H1 (cell line): ENCODE measurements at regions of chr11 and their contacts with region 1.

Region 1: DNA sequence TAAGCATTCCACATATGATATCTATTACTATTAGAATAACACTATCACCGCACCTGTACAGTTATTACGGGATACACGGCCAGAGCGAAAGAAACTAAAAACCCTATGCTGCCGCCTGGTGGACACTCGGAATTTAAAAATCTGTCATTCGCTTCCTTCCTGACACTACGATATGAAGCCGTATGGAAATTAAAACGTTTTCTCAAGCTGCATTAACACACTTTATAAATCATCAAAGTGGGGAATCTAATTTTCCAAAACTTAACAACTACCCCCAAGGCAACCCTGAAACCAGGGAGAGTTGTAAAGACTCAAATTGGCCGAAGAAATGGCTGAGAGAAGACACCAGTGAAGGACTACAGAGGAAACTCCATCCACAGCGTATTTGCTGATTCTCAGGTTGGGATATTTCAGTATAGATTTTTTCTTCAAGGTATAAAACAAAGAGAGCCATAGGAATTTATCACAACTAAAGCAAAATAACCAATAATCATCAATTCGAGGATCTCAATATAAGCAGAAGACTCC is 1.4 kb downstream of the CCDC73 start:
- DNase-seq: peak; percentile 9 to 80
- H3K4me3 ChIP-seq: peak overlapping the region in 1 of 4 experiments; percentile 36; a peak in 2 of 8 replicates
- H3K27ac ChIP-seq: no peak overlapping the region
- H3K4me1 ChIP-seq: no peaks in the 10 kb centered on the region
- H3K27me3 ChIP-seq: no peaks in the 10 kb centered on the region
- CTCF ChIP-seq: peak in 2 of 3 experiments; percentile 58 to 68; a peak in 3 of 4 replicates
- EP300 ChIP-seq: no peak
- POLR2A ChIP-seq: no peak
- RAD21 ChIP-seq: peak; percentile 61 to 71

Region 2: GRCh38 chr11:32713496-32713895 is 79.5 kb before region 1 on chr11:
- CTCF ChIA-PET with region 1: interaction called, 13 read pairs
- POLR2A ChIA-PET with region 1: no interaction called
- DNase-seq: no peak
- H3K4me3 ChIP-seq: no peak overlapping the region
- H3K27ac ChIP-seq: no peak overlapping the region
- H3K4me1 ChIP-seq: no peaks in the 10 kb centered on the region
- H3K27me3 ChIP-seq: no peaks in the 10 kb centered on the region
- CTCF ChIP-seq: peak in 2 of 3 experiments; percentile 32; a peak in 2 of 4 replicates
- EP300 ChIP-seq: no peak
- POLR2A ChIP-seq: no peak
- RAD21 ChIP-seq: peak; percentile 65 to 69

Region 3: DNA sequence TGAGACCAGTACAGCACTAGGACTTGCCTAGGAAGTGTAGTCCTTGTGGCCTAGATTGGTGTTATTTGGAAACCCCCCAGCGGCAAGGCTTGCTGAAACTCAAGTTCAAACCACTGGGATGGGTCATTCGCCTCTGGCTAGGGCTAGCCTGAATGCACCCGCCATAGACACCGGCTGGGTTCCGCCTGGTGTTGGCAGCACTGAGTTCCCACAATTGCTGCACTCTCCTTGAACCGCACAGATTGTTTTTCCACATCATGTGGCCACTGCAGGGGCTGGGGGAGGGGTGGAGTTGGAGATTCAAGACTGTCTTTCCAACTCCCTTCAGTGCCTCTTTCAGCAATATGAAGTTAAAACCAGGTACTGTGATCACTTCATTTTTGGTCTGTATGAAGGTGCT is 41.6 kb before region 1 on chr11:
- CTCF ChIA-PET with region 1: interaction called, 35 read pairs
- POLR2A ChIA-PET with region 1: no interaction called
- DNase-seq: no peak
- H3K4me3 ChIP-seq: no peak overlapping the region
- H3K27ac ChIP-seq: no peak overlapping the region
- H3K4me1 ChIP-seq: no peaks in the 10 kb centered on the region
- H3K27me3 ChIP-seq: no peaks in the 10 kb centered on the region
- CTCF ChIP-seq: peak; percentile 28 to 52 (median 44)
- EP300 ChIP-seq: no peak
- POLR2A ChIP-seq: no peak
- RAD21 ChIP-seq: peak; percentile 9 to 27; a peak in 2 of 4 replicates

Region 4: DNA sequence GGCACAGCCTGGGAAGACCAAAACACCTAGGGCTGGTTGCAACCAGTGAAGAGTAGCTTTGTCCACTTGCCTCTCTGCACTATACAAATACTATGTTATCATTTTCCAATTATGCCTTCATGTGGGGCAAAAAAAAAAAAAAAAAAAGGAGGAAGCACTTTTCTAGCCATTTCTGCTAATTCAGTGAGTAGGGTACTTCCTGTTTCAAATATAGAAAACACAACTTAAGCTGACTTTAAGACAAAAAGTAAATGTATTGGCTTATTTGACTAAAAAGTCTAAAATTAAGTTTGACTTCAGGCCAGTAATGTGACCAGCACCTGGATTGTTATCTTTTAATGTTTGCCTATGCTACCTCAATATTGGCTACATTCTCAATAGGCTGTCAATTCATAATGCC is 13.9 kb before region 1 on chr11:
- CTCF ChIA-PET with region 1: interaction called, 12 read pairs
- POLR2A ChIA-PET with region 1: no interaction called
- DNase-seq: no peak
- H3K4me3 ChIP-seq: no peak overlapping the region
- H3K27ac ChIP-seq: no peak overlapping the region
- H3K4me1 ChIP-seq: no peaks in the 10 kb centered on the region
- H3K27me3 ChIP-seq: no peaks in the 10 kb centered on the region
- CTCF ChIP-seq: no peak
- EP300 ChIP-seq: no peak
- POLR2A ChIP-seq: no peak
- RAD21 ChIP-seq: no peak

Region 5: DNA sequence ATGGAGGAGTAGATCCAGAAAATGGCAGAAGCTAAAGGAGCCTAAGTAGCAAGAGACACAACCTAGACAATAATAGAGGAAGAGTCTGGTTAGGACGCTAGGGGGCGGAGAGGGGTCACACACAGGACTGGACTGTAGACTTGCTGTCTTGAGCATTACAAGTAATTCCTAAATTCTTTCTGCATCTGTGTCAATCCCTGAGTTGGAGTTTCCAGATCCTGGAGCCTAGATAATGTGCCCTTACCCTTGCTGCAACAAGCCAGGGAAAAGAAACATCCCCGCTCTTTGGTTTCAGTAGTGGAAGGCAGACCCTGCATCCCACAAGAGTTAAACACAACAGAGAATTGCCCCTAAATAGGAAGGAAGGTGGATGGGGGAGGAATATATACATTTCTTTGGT is 16.3 kb after region 1 on chr11:
- CTCF ChIA-PET with region 1: interaction called, 35 read pairs
- POLR2A ChIA-PET with region 1: no interaction called
- DNase-seq: peak; percentile 70 to 83
- H3K4me3 ChIP-seq: no peak overlapping the region
- H3K27ac ChIP-seq: no peak overlapping the region
- H3K4me1 ChIP-seq: peaks cover 0 to 2% (median 0%) of the 10 kb centered on the region in 4 experiments; a peak in 1 of 7 replicates
- H3K27me3 ChIP-seq: no peaks in the 10 kb centered on the region
- CTCF ChIP-seq: peak; percentile 71 to 94 (median 80)
- EP300 ChIP-seq: no peak
- POLR2A ChIP-seq: no peak
- RAD21 ChIP-seq: peak; percentile 81 to 88

Region 6: DNA sequence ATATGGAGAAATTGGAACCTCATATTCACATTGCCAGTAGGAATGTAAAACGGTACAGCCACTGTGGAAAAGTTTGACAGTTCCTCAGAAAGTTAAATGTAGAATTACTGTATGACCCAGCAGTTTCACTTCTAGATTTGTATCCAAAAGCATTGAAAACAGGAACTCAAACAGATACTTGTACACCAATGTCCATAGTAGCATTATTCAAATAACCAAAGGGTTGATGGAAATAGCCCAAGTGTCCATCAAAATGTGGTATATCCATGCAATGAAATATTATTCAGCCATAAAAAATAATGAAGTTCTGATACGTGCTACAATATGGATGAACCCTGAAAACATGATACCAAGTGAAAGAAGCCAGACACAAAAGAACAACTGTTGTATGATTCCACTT is 54.5 kb after region 1 on chr11:
- CTCF ChIA-PET with region 1: no interaction called
- POLR2A ChIA-PET with region 1: no interaction called
- DNase-seq: no peak
- H3K4me3 ChIP-seq: no peak overlapping the region
- H3K27ac ChIP-seq: no peak overlapping the region
- H3K4me1 ChIP-seq: no peaks in the 10 kb centered on the region
- H3K27me3 ChIP-seq: no peaks in the 10 kb centered on the region; a peak in 1 of 7 replicates
- CTCF ChIP-seq: no peak
- EP300 ChIP-seq: no peak
- POLR2A ChIP-seq: no peak
- RAD21 ChIP-seq: no peak